GM10248 (cell line): ENCODE measurements at regions of chr4 and their contacts with region 1.

Region 1: GRCh38 chr4:184237612-184238011 is 19.9 kb upstream of the ENPP6 start:
- DNase-seq: no peak
- CTCF ChIP-seq: no peak

Region 2: DNA sequence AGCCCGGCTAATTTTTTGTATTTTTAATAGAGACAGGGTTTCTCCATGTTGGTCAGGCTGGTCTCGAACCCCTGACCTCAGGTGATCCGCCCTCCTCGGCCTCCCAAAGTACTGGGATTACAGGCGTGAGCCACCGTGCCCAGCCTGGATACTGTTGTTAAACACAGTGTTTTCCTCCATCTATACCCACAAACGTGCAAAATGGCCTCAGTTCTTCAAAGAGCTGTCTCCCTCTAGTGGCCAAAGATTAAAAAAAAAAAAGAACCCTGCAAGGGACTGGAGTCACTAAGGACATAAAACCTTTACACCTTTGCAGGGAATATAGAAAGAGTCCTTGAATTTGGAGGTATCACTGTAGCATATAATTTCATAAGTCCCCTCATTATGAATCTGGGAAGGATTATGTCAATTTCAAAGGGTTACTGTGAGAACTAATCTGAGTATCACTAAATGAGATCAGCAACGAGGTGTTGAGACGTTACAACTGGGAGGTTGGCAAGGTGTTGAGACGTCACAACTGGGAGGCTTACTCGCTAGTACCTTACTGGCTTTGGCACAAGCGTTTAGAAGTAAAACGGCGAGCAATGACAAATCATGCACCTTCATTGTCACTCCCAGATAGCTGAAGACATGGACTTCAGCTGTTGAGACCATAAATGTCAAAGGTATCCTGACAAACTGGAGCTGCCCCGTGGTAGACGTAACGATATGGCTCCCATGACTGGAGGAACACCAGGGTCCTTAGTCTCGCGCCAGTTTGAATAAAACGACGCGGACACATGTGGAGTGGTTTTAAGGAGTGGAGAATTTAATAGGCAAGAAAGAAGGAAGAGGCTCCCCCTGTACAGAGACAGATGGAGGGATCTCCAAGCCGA is 13.4 kb after region 1 on chr4:
- CTCF ChIA-PET with region 1: interaction called, 15 read pairs
- POLR2A ChIA-PET with region 1: no interaction called
- DNase-seq: peak; percentile 60
- CTCF ChIP-seq: peak; percentile 35